IMR-90 (cell line): ENCODE measurements at regions of chr3 and their contacts with region 1.

Region 1: GRCh38 chr3:141192345-141192744 is 39.3 kb upstream of the PXYLP1 start:
- DNase-seq: peak; percentile 91
- ATAC-seq: peak; percentile 100
- H3K4me3 ChIP-seq: no peak overlapping the region
- H3K27ac ChIP-seq: no peak overlapping the region
- H3K4me1 ChIP-seq: no peaks in the 10 kb centered on the region
- H3K27me3 ChIP-seq: peaks cover 20% of the 10 kb centered on the region
- CTCF ChIP-seq: peak; percentile 99
- POLR2A ChIP-seq: no peak
- RAD21 ChIP-seq: peak; percentile 93

Region 2: DNA sequence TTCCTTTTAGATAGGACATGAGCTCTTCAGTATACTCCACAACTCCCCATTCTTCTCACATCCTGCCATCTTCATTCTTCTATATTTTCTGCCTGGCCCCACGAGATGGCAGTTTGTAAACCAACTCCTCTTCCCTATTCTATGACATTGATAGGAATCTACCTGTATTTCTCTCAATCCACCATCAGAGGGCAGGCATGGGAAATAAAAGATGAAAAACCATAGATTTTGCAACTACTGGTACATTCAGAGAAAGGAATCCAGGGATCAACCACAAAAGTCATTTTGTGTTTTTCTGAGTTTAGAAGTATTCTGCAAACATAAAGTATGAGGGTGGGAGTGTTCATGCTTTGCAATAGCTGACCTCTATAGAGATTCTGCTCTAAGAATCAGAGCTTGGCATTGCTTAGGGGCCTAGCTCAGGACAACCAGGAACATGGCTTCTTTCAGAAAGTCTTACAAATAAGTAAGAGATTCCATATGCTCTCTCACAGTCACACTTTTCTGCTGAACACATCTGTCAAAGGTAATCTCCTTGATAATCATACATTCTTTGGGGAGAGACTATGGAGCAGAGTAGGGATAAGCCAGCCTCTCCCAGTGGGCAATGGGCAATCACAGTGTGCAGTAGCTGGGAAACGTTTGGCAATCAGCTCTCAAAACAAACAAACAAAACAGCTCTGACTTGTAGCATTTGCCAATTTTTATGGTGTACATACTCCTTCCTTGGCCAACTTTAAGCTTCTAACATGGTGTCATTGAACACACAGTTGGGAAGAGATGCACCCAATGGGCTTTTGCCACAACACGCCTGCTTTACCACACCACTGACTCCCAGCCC is 293.8 kb before region 1 on chr3:
- CTCF ChIA-PET with region 1: interaction called, 9 read pairs
- POLR2A ChIA-PET with region 1: no interaction called
- dilution Hi-C with region 1: no loop called
- in situ Hi-C with region 1: loop called (anchors 10 kb)
- intact Hi-C with region 1: loop called (anchors 1 kb)
- DNase-seq: peak; percentile 87
- ATAC-seq: peak; percentile 94
- H3K4me3 ChIP-seq: no peak overlapping the region
- H3K27ac ChIP-seq: peak overlapping the region; percentile 29; the same call in 1 of the 2 replicates
- H3K4me1 ChIP-seq: peaks cover 3% of the 10 kb centered on the region; the same call in 1 of the 2 replicates
- H3K27me3 ChIP-seq: peaks cover 2% of the 10 kb centered on the region
- CTCF ChIP-seq: peak; percentile 83
- POLR2A ChIP-seq: no peak
- RAD21 ChIP-seq: peak; percentile 70

Region 3: DNA sequence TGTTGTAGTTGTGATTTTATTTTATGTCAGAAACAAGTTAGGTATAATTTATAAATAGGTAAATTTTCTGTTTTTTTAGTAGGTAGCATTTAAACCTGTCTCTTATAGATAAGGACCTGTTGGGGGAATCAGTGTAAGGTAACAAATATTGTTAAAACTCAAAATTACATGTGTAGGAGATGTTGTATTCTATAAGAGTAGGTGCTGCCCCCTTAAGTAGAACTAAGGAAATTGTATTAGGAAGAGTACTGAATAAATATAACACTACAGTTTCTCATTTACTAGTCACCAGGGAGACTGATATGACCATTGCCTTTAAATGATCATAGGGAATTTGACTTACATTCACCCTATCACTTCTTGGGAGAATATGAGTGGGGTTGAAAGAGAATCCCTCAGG is 219.5 kb before region 1 on chr3:
- CTCF ChIA-PET with region 1: no interaction called
- POLR2A ChIA-PET with region 1: no interaction called
- dilution Hi-C with region 1: loop called (anchors 25 kb)
- in situ Hi-C with region 1: no loop called
- intact Hi-C with region 1: no loop called
- DNase-seq: peak; percentile 26
- ATAC-seq: peak; percentile 79
- H3K4me3 ChIP-seq: no peak overlapping the region
- H3K27ac ChIP-seq: no peak overlapping the region
- H3K4me1 ChIP-seq: no peaks in the 10 kb centered on the region
- H3K27me3 ChIP-seq: no peaks in the 10 kb centered on the region
- CTCF ChIP-seq: peak; percentile 50
- POLR2A ChIP-seq: no peak
- RAD21 ChIP-seq: peak; percentile 44

Region 4: GRCh38 chr3:141000027-141000663 is 192.2 kb before region 1 on chr3:
- CTCF ChIA-PET with region 1: interaction called, 4 read pairs
- POLR2A ChIA-PET with region 1: no interaction called
- dilution Hi-C with region 1: loop called (anchors 25 kb)
- in situ Hi-C with region 1: loop called (anchors 5 kb)
- intact Hi-C with region 1: loop called (anchors 1 kb)
- DNase-seq: peak; percentile 42
- ATAC-seq: peak; percentile 100
- H3K4me3 ChIP-seq: no peak overlapping the region
- H3K27ac ChIP-seq: no peak overlapping the region
- H3K4me1 ChIP-seq: no peaks in the 10 kb centered on the region
- H3K27me3 ChIP-seq: peaks cover 5% of the 10 kb centered on the region
- CTCF ChIP-seq: peak; percentile 70
- POLR2A ChIP-seq: no peak
- RAD21 ChIP-seq: peak; percentile 75

Region 5: DNA sequence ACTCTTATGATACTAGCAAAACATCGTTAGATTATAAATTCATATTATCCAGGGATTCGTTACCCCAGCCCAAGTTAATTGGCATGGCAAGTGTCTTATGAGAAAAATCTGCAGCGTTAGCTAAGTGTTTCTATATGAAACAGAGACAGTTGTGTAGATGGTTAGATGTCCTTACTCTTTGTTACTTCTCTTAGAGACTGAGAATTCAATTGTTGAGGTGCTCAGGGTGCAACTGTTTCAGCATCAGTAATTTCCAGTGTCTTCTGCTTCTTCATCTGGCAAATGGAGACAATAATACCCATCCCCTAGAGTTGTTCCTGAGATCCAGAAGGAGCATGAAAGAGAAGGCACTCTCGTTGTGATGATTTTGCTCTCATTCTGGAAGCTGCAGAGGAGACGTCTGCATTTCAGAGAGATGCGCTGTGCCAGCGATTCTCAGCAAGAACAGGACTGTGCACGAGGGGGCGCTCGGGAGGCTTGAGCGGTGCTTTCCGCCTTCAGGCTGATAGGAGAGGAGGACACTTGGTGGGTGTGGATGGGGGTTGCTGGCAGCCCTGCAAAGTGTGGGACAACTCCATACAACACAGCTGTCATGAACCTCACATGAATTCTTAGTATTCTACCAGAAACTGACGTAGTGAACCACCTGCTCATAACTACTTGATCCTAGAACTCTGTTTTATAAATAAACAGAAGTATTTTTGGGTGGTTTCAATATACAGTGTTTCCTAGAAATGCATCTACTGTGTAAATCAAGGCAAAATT is 180.9 kb before region 1 on chr3:
- CTCF ChIA-PET with region 1: interaction called, 5 read pairs
- POLR2A ChIA-PET with region 1: no interaction called
- dilution Hi-C with region 1: no loop called
- in situ Hi-C with region 1: no loop called
- intact Hi-C with region 1: loop called (anchors 1 kb)
- DNase-seq: peak; percentile 44
- ATAC-seq: peak; percentile 95
- H3K4me3 ChIP-seq: no peak overlapping the region
- H3K27ac ChIP-seq: no peak overlapping the region
- H3K4me1 ChIP-seq: no peaks in the 10 kb centered on the region
- H3K27me3 ChIP-seq: peaks cover 7% of the 10 kb centered on the region
- CTCF ChIP-seq: peak; percentile 74
- POLR2A ChIP-seq: no peak
- RAD21 ChIP-seq: peak; percentile 59

Region 6: DNA sequence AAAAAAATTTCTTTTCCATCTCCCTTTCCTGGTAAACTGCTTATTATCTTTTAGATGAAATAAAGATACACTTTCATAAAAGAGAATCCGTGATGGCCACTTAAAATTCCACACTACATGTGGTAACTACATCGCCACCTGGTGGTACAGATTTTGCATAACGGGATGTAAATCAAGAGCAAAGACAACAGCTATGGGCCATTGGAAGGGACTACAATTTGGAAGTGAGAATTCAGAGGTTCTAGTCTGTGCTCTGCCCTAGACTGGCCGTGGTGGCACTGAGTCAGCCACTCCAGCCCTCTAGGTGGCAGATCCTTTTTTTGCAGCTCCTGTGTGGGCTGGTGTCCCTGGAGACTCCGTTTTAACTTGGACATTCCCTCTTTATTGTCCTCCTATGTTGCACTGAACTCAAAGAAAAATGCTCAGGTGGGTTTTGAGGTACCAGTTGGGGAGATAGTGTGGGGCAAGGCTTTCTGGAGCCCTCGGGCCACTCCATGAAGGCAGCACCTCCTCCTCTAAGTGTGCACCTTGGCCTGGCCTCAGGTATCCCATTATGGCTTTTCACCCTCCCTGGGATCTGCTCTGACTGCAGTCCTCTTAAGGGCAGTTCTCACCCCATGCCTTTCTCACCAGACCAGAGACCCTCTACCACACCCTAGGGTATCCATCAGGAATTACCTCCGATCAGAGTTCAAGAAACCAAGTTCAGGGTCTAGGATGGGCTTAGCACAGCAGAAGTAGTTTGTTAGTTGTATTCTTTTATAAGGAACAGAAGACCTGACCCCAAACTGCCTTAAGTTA is 86.3 kb before region 1 on chr3:
- CTCF ChIA-PET with region 1: interaction called, 5 read pairs
- POLR2A ChIA-PET with region 1: no interaction called
- dilution Hi-C with region 1: no loop called
- in situ Hi-C with region 1: no loop called
- intact Hi-C with region 1: loop called (anchors 1 kb)
- DNase-seq: peak; percentile 86
- ATAC-seq: peak; percentile 90
- H3K4me3 ChIP-seq: no peak overlapping the region
- H3K27ac ChIP-seq: no peak overlapping the region
- H3K4me1 ChIP-seq: no peaks in the 10 kb centered on the region
- H3K27me3 ChIP-seq: peaks cover 32% of the 10 kb centered on the region
- CTCF ChIP-seq: peak; percentile 80
- POLR2A ChIP-seq: no peak
- RAD21 ChIP-seq: peak; percentile 72

Region 7: GRCh38 chr3:141303481-141304223 is 111.3 kb after region 1 on chr3:
- CTCF ChIA-PET with region 1: no interaction called
- POLR2A ChIA-PET with region 1: no interaction called
- dilution Hi-C with region 1: no loop called
- in situ Hi-C with region 1: no loop called
- intact Hi-C with region 1: loop called (anchors 1 kb)
- DNase-seq: peak; percentile 86
- ATAC-seq: peak; percentile 62
- H3K4me3 ChIP-seq: no peak overlapping the region
- H3K27ac ChIP-seq: no peak overlapping the region
- H3K4me1 ChIP-seq: peaks cover 6% of the 10 kb centered on the region
- H3K27me3 ChIP-seq: no peaks in the 10 kb centered on the region
- CTCF ChIP-seq: peak; percentile 85
- POLR2A ChIP-seq: no peak
- RAD21 ChIP-seq: peak; percentile 73